T-cell (primary cell): ENCODE measurements at regions of chr5 and their contacts with region 1.

Region 1: DNA sequence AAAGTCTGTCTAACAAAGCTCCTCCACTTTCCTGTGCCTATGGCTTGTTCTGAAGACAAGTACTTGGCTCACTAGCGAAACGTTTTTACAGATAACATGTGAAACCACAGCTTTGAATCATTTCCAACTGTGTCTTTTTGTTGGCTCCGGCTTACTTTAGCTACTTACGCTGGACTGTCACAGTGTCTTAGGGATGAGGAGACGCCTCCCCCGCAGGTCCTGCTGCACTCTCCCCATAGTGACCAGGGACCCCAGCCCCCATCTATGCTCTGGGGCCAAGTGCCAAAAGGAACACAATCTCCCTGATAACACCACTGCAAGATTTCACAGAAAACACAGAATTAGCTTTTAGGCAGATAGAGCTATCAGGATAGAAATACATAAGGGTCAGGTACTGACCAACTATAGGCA is 219.1 kb downstream of the ADAMTS6 start:
- DNase-seq: no peak
- ATAC-seq: no peak
- H3K4me3 ChIP-seq: no peak overlapping the region
- H3K4me3 Mint-ChIP-seq: no peak overlapping the region
- H3K27ac ChIP-seq: no peak overlapping the region
- H3K27ac Mint-ChIP-seq: no peak overlapping the region
- H3K4me1 ChIP-seq: no peaks in the 10 kb centered on the region
- H3K4me1 Mint-ChIP-seq: no peaks in the 10 kb centered on the region
- H3K27me3 ChIP-seq: no peaks in the 10 kb centered on the region
- H3K27me3 Mint-ChIP-seq: peaks cover 0 to 1% of the 10 kb centered on the region in 2 donors

Region 2: GRCh38 chr5:65184780-65185179 is 77.9 kb before region 1 on chr5:
- CTCF ChIA-PET with region 1: no interaction called
- POLR2A ChIA-PET with region 1: interaction called in 1 of 2 experiments, 14 read pairs
- DNase-seq: no peak
- ATAC-seq: no peak
- H3K4me3 ChIP-seq: no peak overlapping the region
- H3K4me3 Mint-ChIP-seq: no peak overlapping the region
- H3K27ac ChIP-seq: no peak overlapping the region
- H3K27ac Mint-ChIP-seq: no peak overlapping the region
- H3K4me1 ChIP-seq: peaks cover 0 to 7% of the 10 kb centered on the region in 2 experiments
- H3K4me1 Mint-ChIP-seq: peaks cover 0 to 11% (median 0%) of the 10 kb centered on the region in 3 donors
- H3K27me3 ChIP-seq: no peaks in the 10 kb centered on the region
- H3K27me3 Mint-ChIP-seq: peaks cover 0 to 2% of the 10 kb centered on the region in 2 donors

Region 3: DNA sequence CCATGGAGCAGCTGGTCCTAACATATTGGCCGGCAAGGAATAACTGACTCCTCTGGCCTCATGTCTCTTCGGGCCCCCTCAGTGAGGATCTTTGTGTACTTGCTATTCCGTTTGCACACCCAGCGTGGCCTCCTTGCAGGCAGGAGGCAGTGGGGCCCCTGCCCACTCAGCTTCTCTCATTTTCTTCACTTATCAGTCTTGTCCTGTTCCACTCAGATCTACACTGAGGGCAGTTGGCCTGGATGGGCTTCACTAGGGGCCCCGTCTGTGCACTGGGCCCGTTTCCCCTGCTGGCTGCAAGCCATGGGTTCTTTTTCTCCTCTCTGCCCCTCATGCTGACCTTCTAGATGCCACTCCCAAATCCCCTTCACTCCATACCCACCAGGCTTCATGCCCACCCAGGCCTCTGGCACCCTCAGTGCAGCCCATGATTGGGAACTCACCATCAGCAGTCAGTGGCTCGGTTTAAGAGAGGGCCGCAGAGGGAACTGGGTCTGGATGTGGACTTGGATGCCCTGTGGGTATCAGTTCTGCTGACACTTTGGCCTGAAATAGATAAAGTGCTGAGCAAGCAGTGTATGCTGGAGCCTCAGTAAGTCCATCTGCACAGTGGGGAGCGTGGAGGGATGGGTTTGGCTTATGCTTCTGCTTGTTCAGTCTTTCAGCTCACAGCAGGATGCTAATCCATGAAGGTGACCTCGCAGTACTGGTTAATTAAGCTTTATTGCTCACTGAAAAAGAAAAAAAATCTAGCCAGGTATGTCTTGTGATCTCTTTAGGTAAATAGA is 721.6 kb after region 1 on chr5:
- CTCF ChIA-PET with region 1: no interaction called
- POLR2A ChIA-PET with region 1: no interaction called
- DNase-seq: no peak
- ATAC-seq: peak in 1 of 4 experiments; percentile 16
- H3K4me3 ChIP-seq: no peak overlapping the region
- H3K4me3 Mint-ChIP-seq: no peak overlapping the region
- H3K27ac ChIP-seq: no peak overlapping the region
- H3K27ac Mint-ChIP-seq: peak overlapping the region; percentile 40 to 54
- H3K4me1 ChIP-seq: peaks cover 2 to 12% of the 10 kb centered on the region in 2 experiments
- H3K4me1 Mint-ChIP-seq: peaks cover 75 to 78% (median 75%) of the 10 kb centered on the region in 3 donors
- H3K27me3 ChIP-seq: no peaks in the 10 kb centered on the region
- H3K27me3 Mint-ChIP-seq: no peaks in the 10 kb centered on the region